HEK293 (cell line): ENCODE measurements at regions of chr5 and their contacts with region 1.

Region 1: GRCh38 chr5:108260117-108260857 is 121.6 kb downstream of the FBXL17 start:
- H3K4me3 ChIP-seq: no peak overlapping the region
- H3K27ac ChIP-seq: no peak overlapping the region
- H3K4me1 ChIP-seq: peaks cover 11% of the 10 kb centered on the region
- CTCF ChIP-seq: peak; percentile 74

Region 2: GRCh38 chr5:107985144-107985543 is 275.1 kb before region 1 on chr5:
- CTCF ChIA-PET with region 1: no interaction called
- POLR2A ChIA-PET with region 1: no interaction called
- H3K4me3 ChIP-seq: no peak overlapping the region
- H3K27ac ChIP-seq: no peak overlapping the region
- H3K4me1 ChIP-seq: peaks cover 19% of the 10 kb centered on the region
- CTCF ChIP-seq: no peak

Region 3: DNA sequence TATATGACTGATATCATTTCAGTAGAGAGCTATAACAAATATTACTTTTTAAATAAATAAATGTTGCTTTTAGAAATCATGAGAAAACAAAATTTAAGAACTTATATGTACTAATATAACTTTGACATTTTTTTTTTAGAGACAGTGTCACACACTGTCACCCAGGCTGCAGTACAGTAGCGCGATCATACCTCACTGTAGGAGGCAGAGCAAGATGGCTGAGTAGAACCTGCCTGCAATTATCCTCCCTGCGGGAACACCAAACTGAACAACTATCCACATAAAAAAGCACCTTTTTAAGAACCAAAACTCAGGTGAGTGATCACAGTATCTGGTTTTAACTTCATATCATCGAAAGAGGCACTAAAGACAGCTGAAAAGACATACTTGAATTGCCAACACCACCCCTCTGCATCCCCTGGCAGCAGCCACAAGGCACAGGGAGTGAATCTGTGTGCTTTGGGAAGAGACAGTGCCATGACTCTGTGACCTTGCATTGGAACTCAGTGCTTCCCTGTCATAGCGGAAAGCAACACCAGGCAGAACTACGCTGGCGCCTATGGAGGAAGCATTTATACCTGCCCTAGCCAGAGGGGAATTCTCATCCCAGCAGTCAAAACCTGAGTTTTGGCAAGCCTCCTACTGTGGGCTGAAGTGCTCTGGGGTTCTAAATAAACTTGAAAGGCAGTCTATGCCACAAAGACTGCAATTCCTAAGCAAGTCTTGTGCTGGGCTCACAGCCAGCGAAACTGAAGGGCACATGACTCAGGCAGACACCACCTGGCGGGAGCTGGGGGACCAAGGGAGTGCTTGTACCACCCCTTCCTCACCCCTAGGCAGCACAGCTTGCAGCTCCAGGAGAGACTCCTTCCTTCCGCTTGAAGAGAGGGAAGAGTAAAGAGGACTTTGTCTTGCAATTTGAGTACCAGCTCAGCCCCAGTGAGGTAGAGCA is 21.1 kb before region 1 on chr5:
- CTCF ChIA-PET with region 1: interaction called, 12 read pairs
- POLR2A ChIA-PET with region 1: no interaction called
- H3K4me3 ChIP-seq: no peak overlapping the region
- H3K27ac ChIP-seq: no peak overlapping the region
- H3K4me1 ChIP-seq: no peaks in the 10 kb centered on the region
- CTCF ChIP-seq: no peak

Region 4: DNA sequence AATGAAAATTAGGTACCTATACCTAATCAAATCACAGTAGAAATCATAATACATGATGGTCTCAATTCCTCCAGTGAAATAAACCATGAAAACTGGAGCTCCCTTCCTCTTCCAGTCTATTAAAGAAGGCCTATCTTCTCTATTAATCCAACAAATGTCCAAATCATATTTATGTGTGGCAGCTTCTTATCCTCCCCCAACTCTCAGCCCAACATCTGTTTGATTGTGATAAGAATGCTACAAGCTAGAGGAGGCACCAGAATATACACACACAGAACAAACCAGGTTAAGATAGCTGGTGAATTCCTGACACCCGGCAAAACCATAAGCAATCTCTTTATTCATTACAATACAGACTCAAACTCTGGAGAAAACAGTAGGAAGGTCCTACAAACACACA is 10.8 kb after region 1 on chr5:
- CTCF ChIA-PET with region 1: interaction called, 13 read pairs
- POLR2A ChIA-PET with region 1: no interaction called
- H3K4me3 ChIP-seq: no peak overlapping the region
- H3K27ac ChIP-seq: no peak overlapping the region
- H3K4me1 ChIP-seq: no peaks in the 10 kb centered on the region
- CTCF ChIP-seq: no peak

Region 5: GRCh38 chr5:108276187-108277050 is 16.1 kb after region 1 on chr5:
- CTCF ChIA-PET with region 1: interaction called, 13 read pairs
- POLR2A ChIA-PET with region 1: no interaction called
- H3K4me3 ChIP-seq: no peak overlapping the region
- H3K27ac ChIP-seq: no peak overlapping the region
- H3K4me1 ChIP-seq: no peaks in the 10 kb centered on the region
- CTCF ChIP-seq: no peak

Region 6: DNA sequence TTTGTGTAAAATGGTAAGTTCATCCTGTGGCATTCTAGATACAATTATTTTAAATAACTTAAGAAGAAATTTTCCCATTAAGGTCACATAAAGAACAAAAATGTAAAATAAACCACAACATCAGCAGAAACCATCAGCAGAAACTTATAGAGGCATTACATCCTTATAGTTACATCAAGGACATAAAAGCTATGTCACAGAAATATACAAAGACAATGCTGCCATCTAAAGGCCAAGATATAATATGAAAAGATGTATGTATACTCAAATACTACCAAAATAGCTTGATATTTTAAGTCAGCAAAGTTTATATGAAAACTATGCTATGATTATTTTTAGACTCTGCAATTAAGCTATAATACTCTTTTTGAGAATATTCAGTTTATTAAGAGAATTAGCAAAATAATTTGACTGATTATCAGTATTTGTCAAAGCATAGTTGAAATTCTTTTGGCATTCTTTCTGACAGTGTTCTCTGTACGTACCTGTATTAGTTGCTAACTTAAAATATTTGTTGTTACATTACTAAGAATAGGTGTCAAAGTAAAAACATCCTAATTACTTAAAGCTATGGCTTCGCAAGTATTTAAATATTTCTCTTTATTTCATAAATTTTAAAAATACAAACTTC is 85.4 kb after region 1 on chr5:
- CTCF ChIA-PET with region 1: interaction called, 73 read pairs
- POLR2A ChIA-PET with region 1: no interaction called
- H3K4me3 ChIP-seq: no peak overlapping the region
- H3K27ac ChIP-seq: no peak overlapping the region
- H3K4me1 ChIP-seq: 0 out of 2 replicates have a peak, but pooled peaks cover 4% of the 10 kb centered on the region
- CTCF ChIP-seq: no peak

Region 7: DNA sequence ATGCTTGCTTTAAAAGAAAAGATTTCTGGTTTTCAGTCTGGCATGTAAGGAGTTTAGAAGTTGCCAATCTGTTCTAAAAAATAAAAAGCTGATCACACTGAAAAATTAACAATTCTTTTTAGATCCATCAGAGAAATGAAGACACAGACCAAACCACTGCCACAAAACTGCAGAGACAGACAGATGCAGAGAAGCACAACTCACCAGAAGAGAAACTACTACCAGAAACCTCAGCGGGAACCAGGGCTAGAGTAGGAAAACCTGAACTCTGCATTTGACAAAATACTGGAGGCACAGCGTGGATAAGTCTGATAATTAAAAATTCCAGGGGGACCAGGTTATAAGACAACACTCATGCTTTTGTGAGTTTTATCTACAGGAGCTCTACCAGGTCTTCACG is 92.8 kb after region 1 on chr5:
- CTCF ChIA-PET with region 1: interaction called, 17 read pairs
- POLR2A ChIA-PET with region 1: no interaction called
- H3K4me3 ChIP-seq: no peak overlapping the region
- H3K27ac ChIP-seq: no peak overlapping the region
- H3K4me1 ChIP-seq: no peaks in the 10 kb centered on the region
- CTCF ChIP-seq: no peak